Right ventricle myocardium inferior (tissue), 1 donor: ENCODE measurements at regions of chr22 and their contacts with region 1.

Region 1: DNA sequence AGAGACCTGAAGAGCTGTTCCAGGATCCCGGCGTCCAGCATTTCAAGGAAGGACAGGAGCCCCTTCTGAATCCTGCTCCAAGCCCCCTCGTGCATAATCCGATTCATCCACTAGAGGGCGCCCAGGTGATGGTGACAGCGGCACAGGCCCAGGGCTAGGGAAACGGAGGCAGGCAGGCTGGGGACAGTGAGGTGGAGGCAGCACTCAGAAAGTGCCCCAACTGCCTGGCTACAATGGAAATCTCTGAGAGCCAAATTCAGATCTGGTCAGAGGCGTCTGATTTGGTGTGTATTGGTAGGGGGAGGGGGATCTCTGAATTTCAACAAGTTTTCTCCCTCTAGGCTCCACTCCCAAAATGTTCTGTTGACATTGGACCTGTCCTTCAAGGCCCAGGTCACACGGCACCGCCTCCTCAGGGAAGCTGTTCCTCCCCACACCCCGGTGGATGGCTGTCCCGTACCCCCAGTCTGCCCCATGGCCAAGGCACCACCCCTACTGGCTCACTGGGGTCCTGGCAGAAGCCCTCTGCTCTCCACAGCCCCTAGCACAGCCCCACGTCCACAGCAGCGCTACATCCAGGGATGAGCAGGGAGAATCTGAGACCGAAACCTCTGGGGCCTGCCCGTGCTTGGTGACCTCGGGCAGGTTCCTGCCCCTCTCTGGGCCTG is 142.9 kb downstream of the CRYBB2 start:
- DNase-seq: no peak
- ATAC-seq: peak; percentile 40

Region 2: DNA sequence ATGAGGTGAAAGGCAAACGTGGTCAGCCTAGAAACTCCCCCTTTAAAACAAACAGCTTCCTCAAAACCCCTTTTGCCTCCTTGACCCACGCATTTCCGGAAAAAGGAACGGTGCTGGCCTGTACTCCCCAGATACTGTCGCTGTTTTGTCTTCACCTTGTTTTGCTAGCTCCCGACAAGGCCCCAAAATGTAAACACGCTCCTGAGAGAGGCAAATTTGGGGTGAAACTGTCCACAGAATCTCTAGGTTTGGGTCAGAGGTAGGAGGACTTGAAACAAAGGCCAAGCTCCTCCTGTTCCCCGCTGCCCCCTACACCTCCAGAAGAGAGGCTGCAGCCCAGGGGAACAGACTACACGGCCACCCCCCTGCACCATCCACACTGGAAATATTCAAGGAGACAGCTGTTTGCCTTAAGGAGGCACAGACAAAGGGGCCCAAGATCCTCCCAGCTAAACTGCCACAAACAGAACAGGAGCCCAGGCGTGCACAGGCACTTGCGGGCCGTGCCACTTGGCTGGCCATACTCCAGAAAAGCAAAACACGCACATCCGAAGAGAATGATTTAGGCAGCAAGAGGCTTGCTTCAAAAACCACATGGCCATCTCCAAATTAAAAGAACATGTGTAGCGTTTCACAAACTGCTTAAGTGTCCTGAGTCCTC is 41.6 kb after region 1 on chr22:
- intact Hi-C with region 1: loop called (anchors 2 kb)
- DNase-seq: no peak
- ATAC-seq: no peak

Region 3: GRCh38 chr22:25447686-25448434 is 85.5 kb after region 1 on chr22:
- intact Hi-C with region 1: loop called (anchors 1 kb)
- DNase-seq: peak; percentile 94
- ATAC-seq: peak; percentile 97

Region 4: DNA sequence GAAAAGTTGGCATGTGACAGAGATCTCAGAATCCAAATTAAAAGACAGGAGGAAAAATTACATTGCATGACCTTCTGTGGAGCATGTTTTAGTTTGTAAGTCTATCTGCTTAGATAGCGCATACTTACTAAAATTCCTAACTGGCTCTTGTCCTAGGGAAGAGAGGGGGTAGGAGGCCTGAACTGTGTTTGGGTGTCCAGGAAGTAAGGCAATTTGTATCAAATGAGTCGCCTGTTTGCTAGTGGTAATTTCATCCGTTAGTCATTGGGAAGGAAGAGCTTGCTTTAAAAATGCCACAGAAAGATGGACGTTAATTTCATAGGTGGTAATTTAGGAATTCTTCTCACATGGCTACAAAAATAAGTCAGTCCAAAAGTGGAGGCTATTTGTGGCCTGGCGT is 220.6 kb after region 1 on chr22:
- intact Hi-C with region 1: no loop called
- DNase-seq: no peak
- ATAC-seq: no peak